Ovary (tissue), 10 donors: ENCODE measurements at regions of chr2 and their contacts with region 1.

Region 1: DNA sequence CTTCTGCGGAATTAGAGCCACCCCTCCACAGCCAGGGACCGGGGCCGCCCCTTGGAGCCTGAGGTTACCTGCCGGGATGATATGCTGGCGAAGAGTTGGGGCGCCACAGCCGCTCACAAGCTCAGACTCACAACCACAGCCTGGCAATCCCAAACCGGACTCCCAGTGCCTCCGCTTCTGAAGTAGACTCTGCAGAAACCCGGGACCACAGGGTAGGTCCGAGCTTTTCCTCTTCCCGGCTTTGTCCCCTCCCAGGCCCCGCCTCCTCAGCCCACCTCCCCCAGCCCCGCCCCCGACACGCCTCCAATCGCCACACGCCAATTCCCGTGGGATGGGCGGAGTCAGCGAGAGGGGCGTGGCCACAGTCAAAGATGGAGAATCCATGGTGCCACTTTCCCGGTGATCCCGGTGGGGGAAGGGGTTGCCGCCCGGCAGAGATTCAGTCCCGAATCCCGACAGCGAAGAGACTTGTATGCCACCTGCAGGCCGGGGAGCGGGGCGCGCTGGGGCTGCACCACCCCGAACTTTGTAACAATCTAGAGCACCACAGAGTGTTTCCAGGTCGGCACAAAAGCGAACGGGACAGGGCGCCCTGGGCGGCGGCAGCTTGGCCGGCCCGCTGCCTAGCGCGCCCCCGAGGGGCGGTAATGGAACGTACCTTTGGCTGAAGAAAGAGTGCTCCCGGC is at the start of gene IDH1:
- DNase-seq: peak; percentile 96 to 100 (median 99)
- H3K4me3 ChIP-seq: peak within 1 kb of the TSS; percentile 87
- H3K27ac ChIP-seq: peak within 1 kb of the TSS; percentile 33 to 49
- H3K4me1 ChIP-seq: peaks cover 4% of the 10 kb centered on the region
- H3K27me3 ChIP-seq: no peaks in the 10 kb centered on the region
- CTCF ChIP-seq: peak in 2 of 3 donors; percentile 30 to 45
- EP300 ChIP-seq: no peak
- POLR2A ChIP-seq: no peak
- total RNA-seq, gene IDH1: 39.9 to 148 (median 73.8) TPM

Region 2: GRCh38 chr2:208101716-208102631 is 153.0 kb before region 1 on chr2:
- intact Hi-C with region 1: loop called in 2 of 4 experiments (anchors 10 kb)
- DNase-seq: no peak
- H3K4me3 ChIP-seq: no peak overlapping the region
- H3K27ac ChIP-seq: no peak overlapping the region
- H3K4me1 ChIP-seq: no peaks in the 10 kb centered on the region
- H3K27me3 ChIP-seq: no peaks in the 10 kb centered on the region
- CTCF ChIP-seq: peak in 2 of 3 donors; percentile 34 to 35
- EP300 ChIP-seq: no peak
- POLR2A ChIP-seq: no peak

Region 3: DNA sequence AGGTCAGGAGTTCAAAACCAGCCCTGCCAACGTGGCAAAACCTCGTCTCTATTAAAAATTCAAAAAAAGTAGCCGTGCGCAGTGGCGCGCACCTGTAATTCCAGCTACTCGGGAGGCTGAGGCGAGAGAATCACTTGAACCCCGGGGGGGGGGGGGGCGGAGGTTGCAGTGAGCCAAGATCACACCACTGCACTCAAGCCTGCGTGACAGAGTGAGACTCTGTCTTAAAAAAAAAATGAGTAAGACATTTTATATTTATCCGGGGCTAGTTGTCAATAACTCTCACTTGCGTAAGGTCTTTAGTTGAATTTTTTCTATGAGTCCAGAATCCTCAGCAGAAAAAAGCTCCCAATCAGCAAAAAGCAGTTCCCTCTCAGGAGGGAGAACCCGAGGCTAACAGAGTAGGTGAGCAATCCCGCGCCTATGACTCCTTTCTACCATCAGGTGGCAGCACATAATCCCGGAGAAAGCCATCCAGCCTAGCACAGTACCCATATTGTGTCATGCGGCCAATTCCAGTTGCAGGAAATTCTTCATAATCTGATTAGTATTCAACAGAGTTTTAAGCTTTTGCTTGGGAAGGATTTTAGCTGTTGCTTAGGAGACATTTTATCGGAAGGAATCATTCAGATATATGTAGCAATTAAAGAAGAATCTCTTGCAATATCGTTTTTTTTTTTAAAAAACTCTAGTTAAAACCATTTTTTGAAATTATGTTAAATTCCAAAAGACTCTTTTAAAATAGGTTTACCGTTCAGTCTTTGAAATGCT is 79.8 kb before region 1 on chr2:
- intact Hi-C with region 1: loop called in 2 of 4 experiments (anchors 5 kb)
- DNase-seq: peak; percentile 69 to 84 (median 75)
- H3K4me3 ChIP-seq: no peak overlapping the region
- H3K27ac ChIP-seq: no peak overlapping the region
- H3K4me1 ChIP-seq: no peaks in the 10 kb centered on the region
- H3K27me3 ChIP-seq: no peaks in the 10 kb centered on the region
- CTCF ChIP-seq: peak; percentile 47 to 69 (median 65)
- EP300 ChIP-seq: no peak
- POLR2A ChIP-seq: no peak